GM12878 (cell line): ENCODE measurements at regions of chr10 and their contacts with region 1.

Region 1: GRCh38 chr10:67884313-67884841 is at the start of gene SIRT1:
- DNase-seq: peak; percentile 71
- ATAC-seq: peak; percentile 90
- H3K4me3 ChIP-seq: peak within 1 kb of the TSS; percentile 93
- H3K27ac ChIP-seq: peak within 1 kb of the TSS; percentile 78
- H3K4me1 ChIP-seq: peaks cover 4% of the 10 kb centered on the region
- H3K27me3 ChIP-seq: no peaks in the 10 kb centered on the region
- CTCF ChIP-seq: peak in 1 of 3 experiments; percentile 15; a peak in 1 of 6 replicates
- EP300 ChIP-seq: peak in 1 of 2 experiments; percentile 48; a peak in 1 of 4 replicates
- POLR2A ChIP-seq: peak; percentile 91
- RAD21 ChIP-seq: no peak
- polyA plus RNA-seq, gene SIRT1: 4.9 to 6.6 TPM

Region 2: DNA sequence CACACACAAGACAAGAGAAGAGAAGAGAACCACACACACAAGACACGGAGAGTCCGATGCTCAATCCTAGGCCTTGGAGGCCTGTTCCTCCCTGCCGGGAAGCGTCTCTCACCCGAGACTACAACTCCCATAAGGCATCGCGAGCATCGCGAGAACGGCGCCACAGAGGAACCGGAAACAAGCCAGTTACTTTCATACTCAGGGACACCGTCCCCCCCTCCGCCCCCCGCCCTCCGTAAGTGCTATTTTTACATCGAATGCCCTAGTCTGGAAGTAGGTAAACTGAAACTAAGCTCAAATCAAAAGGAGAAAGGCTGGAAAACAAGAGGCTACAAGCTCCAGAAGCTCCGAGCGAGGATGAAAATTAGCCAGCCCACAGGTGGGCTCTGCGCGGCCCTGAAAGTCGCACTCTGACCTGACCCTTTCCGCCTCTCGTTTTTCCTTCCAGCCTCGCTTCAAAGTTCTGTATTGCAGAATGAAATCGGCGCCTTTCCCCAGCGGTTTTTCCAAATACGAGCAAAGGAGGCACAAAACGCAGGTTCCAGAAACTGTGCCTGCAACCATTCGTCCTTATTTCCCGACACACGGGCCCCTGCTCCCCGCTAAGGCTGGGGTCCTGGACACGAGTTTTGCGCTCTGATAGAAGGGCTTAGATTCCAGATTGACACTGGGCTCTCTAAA is 34.9 kb before region 1 on chr10:
- CTCF ChIA-PET with region 1: interaction called, 11 read pairs
- POLR2A ChIA-PET with region 1: interaction called, 7 read pairs
- RAD21 ChIA-PET with region 1: no interaction called
- SMC1A ChIA-PET with region 1: interaction called, 5 read pairs
- in situ Hi-C with region 1: no loop called
- intact Hi-C with region 1: no loop called
- DNase-seq: peak; percentile 84
- ATAC-seq: peak; percentile 98
- H3K4me3 ChIP-seq: peak overlapping the region; percentile 82
- H3K27ac ChIP-seq: peak overlapping the region; percentile 98
- H3K4me1 ChIP-seq: no peaks in the 10 kb centered on the region
- H3K27me3 ChIP-seq: no peaks in the 10 kb centered on the region
- CTCF ChIP-seq: no peak
- EP300 ChIP-seq: no peak
- POLR2A ChIP-seq: peak; percentile 71
- RAD21 ChIP-seq: no peak

Region 3: DNA sequence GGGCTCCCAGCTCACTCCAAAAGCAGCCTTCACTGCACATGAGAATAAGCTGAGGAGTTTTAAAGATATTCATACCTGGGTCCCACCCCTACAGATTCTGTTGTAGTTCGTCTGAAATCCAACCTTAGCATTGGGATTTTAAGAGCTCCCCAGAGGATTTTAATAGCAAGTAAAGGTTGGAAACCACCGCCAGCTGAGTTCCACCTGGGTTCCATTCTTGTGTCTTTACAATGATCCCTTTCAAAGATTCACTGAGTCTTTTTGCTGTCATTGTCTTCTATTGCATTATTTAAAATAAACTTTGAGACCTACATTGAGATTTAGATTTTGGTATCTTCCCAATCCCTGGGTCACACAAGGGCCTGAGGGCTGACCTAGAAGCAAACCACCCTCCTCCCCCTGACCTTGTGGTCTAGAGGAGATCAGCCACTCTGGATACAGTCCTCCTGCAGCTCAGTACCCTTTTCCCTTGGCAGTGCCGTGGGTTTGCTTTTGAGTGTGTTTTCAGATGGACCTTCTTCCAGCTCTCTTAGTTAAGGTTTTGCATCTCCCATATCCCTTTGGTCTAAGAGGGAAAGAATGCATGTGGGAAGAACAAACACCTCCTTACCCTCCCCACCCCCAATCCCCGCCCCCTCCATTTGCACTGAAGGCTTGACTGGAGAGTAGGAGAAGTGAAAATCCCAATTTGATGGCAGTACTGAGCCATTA is 22.5 kb before region 1 on chr10:
- CTCF ChIA-PET with region 1: interaction called, 5 read pairs
- POLR2A ChIA-PET with region 1: interaction called, 3 read pairs
- RAD21 ChIA-PET with region 1: interaction called, 13 read pairs
- SMC1A ChIA-PET with region 1: interaction called, 3 read pairs
- in situ Hi-C with region 1: no loop called
- intact Hi-C with region 1: no loop called
- DNase-seq: no peak
- ATAC-seq: 0 out of 3 replicates have a peak, but pooled peaks have one; percentile 18
- H3K4me3 ChIP-seq: no peak overlapping the region
- H3K27ac ChIP-seq: no peak overlapping the region
- H3K4me1 ChIP-seq: no peaks in the 10 kb centered on the region; the same call in 1 of the 2 replicates
- H3K27me3 ChIP-seq: no peaks in the 10 kb centered on the region
- CTCF ChIP-seq: no peak
- EP300 ChIP-seq: no peak
- POLR2A ChIP-seq: no peak
- RAD21 ChIP-seq: no peak

Region 4: DNA sequence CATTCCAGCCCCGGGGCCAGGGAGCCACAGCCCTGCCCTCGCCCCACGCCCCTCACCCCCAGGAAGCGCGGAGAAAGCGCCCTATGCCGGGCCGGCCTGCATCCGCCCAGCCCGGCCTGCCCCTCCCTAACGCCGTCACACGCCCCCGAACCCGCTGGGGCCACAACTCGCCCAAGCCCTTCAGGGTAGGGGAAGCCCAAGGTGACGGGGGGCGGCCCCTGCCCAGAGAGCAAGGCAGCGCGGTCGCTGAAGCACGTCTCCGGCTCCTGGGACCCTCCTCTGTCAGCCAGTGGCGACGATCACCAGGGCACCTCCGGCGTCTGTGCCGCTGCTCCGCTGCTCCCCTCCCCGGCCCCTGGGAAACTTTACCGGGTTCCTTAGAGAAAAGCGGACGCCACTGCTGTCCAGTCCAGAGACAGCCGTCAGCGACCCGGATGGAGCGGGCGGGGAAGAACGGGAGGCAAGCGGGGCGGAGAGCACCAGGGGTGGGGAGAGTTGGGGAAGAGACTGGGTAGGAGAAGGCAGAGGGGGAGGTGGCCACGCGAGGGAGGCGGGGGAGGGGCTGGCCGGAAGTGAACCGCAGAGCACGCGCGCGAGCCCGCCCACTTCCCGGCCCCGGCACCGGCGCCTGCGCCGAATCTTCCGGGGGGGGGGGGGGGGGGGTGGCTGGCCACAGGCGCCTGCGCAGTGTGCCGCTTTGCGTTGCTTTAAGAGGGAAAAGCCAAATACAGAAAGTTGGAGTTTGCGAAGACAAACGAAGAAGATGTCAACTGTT is 190.6 kb after region 1 on chr10 and contains the start of gene HERC4:
- CTCF ChIA-PET with region 1: interaction called, 4 read pairs
- POLR2A ChIA-PET with region 1: interaction called, 11 read pairs
- RAD21 ChIA-PET with region 1: interaction called, 6 read pairs
- SMC1A ChIA-PET with region 1: interaction called, 3 read pairs
- in situ Hi-C with region 1: no loop called
- intact Hi-C with region 1: loop called (anchors 10 kb)
- DNase-seq: peak; percentile 64
- ATAC-seq: peak; percentile 93
- H3K4me3 ChIP-seq: peak within 1 kb of the TSS; percentile 89
- H3K27ac ChIP-seq: peak within 1 kb of the TSS; percentile 92
- H3K4me1 ChIP-seq: 0 out of 2 replicates have a peak, but pooled peaks cover 3% of the 10 kb centered on the region
- H3K27me3 ChIP-seq: no peaks in the 10 kb centered on the region
- CTCF ChIP-seq: no peak
- EP300 ChIP-seq: no peak
- POLR2A ChIP-seq: peak; percentile 97
- RAD21 ChIP-seq: no peak
- polyA plus RNA-seq, gene HERC4: 9.7 to 11.5 TPM

Region 5: GRCh38 chr10:68315582-68315981 is 431.2 kb after region 1 on chr10:
- CTCF ChIA-PET with region 1: no interaction called
- POLR2A ChIA-PET with region 1: no interaction called
- RAD21 ChIA-PET with region 1: no interaction called
- SMC1A ChIA-PET with region 1: no interaction called
- in situ Hi-C with region 1: no loop called
- intact Hi-C with region 1: no loop called
- DNase-seq: no peak
- ATAC-seq: no peak
- H3K4me3 ChIP-seq: no peak overlapping the region
- H3K27ac ChIP-seq: no peak overlapping the region; the same call in 1 of the 2 replicates
- H3K4me1 ChIP-seq: no peaks in the 10 kb centered on the region
- H3K27me3 ChIP-seq: no peaks in the 10 kb centered on the region
- CTCF ChIP-seq: no peak
- EP300 ChIP-seq: no peak
- POLR2A ChIP-seq: no peak
- RAD21 ChIP-seq: no peak

Region 6: DNA sequence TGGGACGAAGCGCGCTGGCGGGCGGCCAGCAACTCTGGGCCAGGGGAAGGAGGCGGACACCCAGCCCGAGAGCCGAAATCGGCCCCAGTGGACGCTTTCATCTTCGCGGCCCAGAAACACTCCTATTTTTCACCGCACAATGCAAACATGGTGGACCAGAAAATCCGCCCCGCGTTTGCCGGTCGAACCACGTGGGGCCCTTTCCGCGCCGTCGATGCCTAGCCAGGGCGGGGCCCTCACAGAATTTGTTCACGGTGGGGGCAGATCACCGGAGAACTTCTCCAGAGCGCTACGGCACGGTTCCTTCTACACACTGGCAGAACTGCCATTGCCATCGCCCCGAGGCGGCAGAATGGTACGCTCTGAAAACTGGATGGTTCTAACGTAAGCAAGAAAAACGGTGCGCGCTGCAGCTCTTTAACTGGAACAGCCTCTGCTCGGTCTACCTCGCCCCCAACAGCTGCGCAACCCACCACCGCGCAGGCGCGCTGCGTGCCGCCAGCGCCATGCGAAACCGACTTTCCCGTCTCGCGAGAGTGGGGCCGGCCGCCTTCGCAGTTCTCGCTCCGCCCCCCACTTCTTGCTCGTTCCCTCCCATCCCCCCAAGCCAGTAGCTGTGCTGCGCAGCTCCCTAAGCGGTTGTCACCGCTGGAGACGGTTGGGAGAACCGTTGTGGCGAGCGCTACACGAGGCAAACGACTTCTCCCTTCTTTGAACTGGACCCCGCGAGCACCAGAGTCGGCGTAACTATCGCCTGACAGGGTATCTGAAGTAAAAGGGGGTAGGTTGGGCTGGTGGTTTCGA is 447.3 kb after region 1 on chr10 and contains the start of gene HNRNPH3:
- CTCF ChIA-PET with region 1: no interaction called
- POLR2A ChIA-PET with region 1: no interaction called
- RAD21 ChIA-PET with region 1: no interaction called
- SMC1A ChIA-PET with region 1: interaction called, 3 read pairs
- in situ Hi-C with region 1: loop called (anchors 5 kb)
- intact Hi-C with region 1: loop called (anchors 5 kb)
- DNase-seq: peak; percentile 93
- ATAC-seq: peak; percentile 80
- H3K4me3 ChIP-seq: peak within 1 kb of the TSS; percentile 99
- H3K27ac ChIP-seq: peak within 1 kb of the TSS; percentile 99
- H3K4me1 ChIP-seq: no peaks in the 10 kb centered on the region; the same call in 1 of the 2 replicates
- H3K27me3 ChIP-seq: no peaks in the 10 kb centered on the region
- CTCF ChIP-seq: no peak
- EP300 ChIP-seq: peak in 1 of 2 experiments; percentile 37; a peak in 1 of 4 replicates
- POLR2A ChIP-seq: peak; percentile 98
- RAD21 ChIP-seq: no peak
- polyA plus RNA-seq, gene HNRNPH3: 76.0 to 98.7 TPM